Naive thymus-derived CD4-positive, alpha-beta T cell (primary cell): ENCODE measurements at regions of chr10 and their contacts with region 1.

Region 1: DNA sequence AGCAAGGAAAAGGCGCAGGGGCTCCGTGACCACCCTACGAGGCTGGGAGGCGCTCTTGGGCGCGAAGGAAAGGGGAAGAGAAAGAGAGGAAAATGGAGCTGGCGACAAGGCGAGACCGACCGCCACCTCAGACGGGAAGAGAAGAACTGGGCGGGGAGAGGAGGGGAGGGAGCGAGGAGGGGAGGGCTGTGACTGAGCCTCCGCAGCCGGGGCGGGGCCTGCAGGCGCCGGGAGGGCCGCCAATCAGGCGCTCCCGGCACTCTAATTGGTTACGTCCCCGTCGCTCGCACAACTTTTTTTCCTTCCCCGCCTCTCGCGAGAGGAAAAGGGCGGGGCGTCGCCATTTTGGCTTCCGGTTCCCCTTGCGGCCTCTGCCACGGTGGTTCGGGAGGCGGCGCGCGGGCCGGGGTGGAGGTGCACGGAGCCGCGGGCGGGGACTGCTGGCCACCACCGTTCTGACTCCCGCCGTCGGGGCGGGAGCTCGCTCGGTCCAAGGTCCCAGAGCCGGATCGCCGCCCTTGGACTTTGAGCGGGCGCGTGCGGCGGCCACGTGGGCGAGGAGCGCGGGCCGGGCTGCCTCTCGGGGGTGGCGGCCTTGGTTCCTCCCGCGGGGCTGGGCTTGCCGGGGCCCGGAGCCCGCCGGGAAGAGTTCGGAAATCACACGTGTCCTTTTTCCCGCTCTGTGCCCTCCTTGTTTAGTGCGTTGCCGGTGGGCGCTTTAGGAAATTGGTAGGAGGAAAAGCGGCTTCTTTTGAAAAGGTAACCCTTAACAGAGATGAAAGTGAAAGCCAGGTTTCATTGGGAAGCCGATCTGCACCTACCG is at the start of gene GDI2:
- DNase-seq: peak; percentile 94 to 98 (median 97)
- ATAC-seq: peak; percentile 98
- H3K4me3 ChIP-seq: peak within 1 kb of the TSS; percentile 86
- H3K4me3 Mint-ChIP-seq: peak within 1 kb of the TSS; percentile 85 to 95 (median 93)
- H3K27ac ChIP-seq: peak within 1 kb of the TSS; percentile 99
- H3K27ac Mint-ChIP-seq: peak within 1 kb of the TSS; percentile 85 to 98 (median 95)
- H3K4me1 ChIP-seq: peaks cover 27 to 37% of the 10 kb centered on the region in 2 donors
- H3K4me1 Mint-ChIP-seq: peaks cover 49 to 71% (median 67%) of the 10 kb centered on the region in 7 donors
- H3K27me3 ChIP-seq: no peaks in the 10 kb centered on the region
- H3K27me3 Mint-ChIP-seq: no peaks in the 10 kb centered on the region
- total RNA-seq, gene GDI2: 85.3 to 236 (median 121) TPM

Region 2: GRCh38 chr10:5196702-5197113 is 616.8 kb before region 1 on chr10 and contains the start of gene AKR1C4:
- CTCF ChIA-PET with region 1: no interaction called
- POLR2A ChIA-PET with region 1: no interaction called
- intact Hi-C with region 1: no loop called
- DNase-seq: no peak
- ATAC-seq: no peak
- H3K4me3 ChIP-seq: no peak within 1 kb of the TSS
- H3K4me3 Mint-ChIP-seq: no peak within 1 kb of the TSS
- H3K27ac ChIP-seq: no peak within 1 kb of the TSS
- H3K27ac Mint-ChIP-seq: no peak within 1 kb of the TSS
- H3K4me1 ChIP-seq: no peaks in the 10 kb centered on the region
- H3K4me1 Mint-ChIP-seq: no peaks in the 10 kb centered on the region
- H3K27me3 ChIP-seq: no peaks in the 10 kb centered on the region
- H3K27me3 Mint-ChIP-seq: peaks cover 0 to 6% (median 0%) of the 10 kb centered on the region in 5 donors
- total RNA-seq, gene AKR1C4: not detected

Region 3: DNA sequence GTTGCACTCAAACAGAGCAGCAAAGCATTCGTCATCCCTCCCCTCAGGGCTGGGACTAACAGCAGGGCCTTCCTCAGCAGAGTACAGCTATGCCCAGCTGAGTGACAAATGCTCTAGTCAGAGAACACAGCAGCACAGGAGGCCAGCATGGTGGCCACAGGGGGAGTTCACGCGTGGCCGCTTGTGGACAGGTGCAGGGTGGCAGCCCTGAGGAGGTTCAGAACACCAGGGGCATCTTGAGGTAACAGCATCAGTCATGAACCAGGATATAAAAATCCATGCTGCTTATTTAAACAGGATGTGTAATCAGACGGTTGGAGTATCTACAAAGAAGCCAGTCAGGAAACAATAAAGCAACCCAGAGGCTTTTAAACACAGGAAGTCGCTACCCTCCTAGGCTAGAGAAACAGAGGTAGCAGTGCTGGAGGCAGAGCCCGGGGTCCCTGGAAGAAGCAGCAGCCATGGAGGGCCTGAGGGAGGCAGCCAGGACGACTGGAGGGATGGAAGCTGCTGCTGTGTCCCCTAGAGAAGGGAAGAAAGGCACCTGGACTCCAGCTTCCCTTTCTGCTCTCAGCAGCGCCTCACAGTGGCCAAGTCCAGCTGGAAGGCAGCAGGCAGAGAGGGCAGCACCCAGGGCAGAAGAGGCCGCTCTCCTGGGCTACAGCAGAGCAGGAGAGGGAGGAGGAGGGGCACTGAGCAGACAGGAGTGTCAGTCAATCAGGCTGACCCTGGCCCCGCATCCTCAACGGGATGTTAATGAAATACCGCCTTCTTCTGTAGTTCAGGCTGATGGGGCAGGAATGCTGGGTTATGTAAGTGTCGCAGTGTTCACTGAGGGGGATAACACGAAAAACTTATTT is 519.6 kb before region 1 on chr10:
- CTCF ChIA-PET with region 1: no interaction called
- POLR2A ChIA-PET with region 1: no interaction called
- intact Hi-C with region 1: loop called in 1 of 2 experiments (anchors 2 kb)
- DNase-seq: peak; percentile 52 to 78 (median 67)
- ATAC-seq: peak; percentile 60
- H3K4me3 ChIP-seq: peak overlapping the region; percentile 58
- H3K4me3 Mint-ChIP-seq: peak overlapping the region; percentile 82 to 100 (median 94)
- H3K27ac ChIP-seq: peak overlapping the region; percentile 71
- H3K27ac Mint-ChIP-seq: peak overlapping the region in 8 of 9 donors; percentile 88 to 100 (median 98)
- H3K4me1 ChIP-seq: peaks cover 47 to 49% of the 10 kb centered on the region in 2 donors
- H3K4me1 Mint-ChIP-seq: peaks cover 61 to 96% (median 80%) of the 10 kb centered on the region in 7 donors
- H3K27me3 ChIP-seq: no peaks in the 10 kb centered on the region
- H3K27me3 Mint-ChIP-seq: no peaks in the 10 kb centered on the region

Region 4: GRCh38 chr10:5776136-5776880 is 37.2 kb before region 1 on chr10:
- CTCF ChIA-PET with region 1: no interaction called
- POLR2A ChIA-PET with region 1: interaction called, 14 read pairs
- intact Hi-C with region 1: loop called (anchors 1 to 5 kb)
- DNase-seq: no peak
- ATAC-seq: peak; percentile 5
- H3K4me3 ChIP-seq: peak overlapping the region; percentile 32
- H3K4me3 Mint-ChIP-seq: peak overlapping the region; percentile 59 to 82 (median 76)
- H3K27ac ChIP-seq: peak overlapping the region; percentile 72
- H3K27ac Mint-ChIP-seq: peak overlapping the region; percentile 83 to 95 (median 94)
- H3K4me1 ChIP-seq: peaks cover 15 to 24% of the 10 kb centered on the region in 2 donors
- H3K4me1 Mint-ChIP-seq: peaks cover 23 to 75% (median 62%) of the 10 kb centered on the region in 7 donors
- H3K27me3 ChIP-seq: no peaks in the 10 kb centered on the region
- H3K27me3 Mint-ChIP-seq: no peaks in the 10 kb centered on the region

Region 5: DNA sequence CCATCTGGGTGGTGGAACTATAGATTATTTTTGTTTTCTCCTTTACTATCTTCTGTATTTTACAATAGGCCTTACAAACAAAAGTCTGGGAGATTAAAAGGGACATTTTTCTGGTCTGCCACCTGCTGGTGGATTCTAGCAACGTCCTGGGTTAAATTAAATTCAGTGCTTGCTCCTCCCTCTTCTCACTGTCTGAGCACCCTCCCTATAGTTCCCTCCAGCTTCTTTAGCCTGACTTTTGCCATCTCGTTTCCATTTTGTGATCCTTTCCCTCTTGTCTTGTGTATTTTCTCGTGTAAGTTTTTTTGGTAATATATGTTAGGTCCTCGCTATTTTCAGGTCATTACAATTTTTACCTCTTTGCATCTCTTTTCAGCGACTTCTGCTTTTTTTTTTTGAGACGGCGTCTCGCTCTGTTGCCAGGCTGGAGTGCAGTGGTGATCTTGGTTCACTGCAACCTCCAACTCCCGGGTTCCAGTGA is 60.1 kb after region 1 on chr10:
- CTCF ChIA-PET with region 1: no interaction called
- POLR2A ChIA-PET with region 1: no interaction called
- intact Hi-C with region 1: loop called (anchors 1 kb)
- DNase-seq: peak; percentile 42 to 76 (median 67)
- ATAC-seq: peak; percentile 96
- H3K4me3 ChIP-seq: no peak overlapping the region
- H3K4me3 Mint-ChIP-seq: peak overlapping the region in 8 of 10 donors; percentile 46 to 76 (median 58)
- H3K27ac ChIP-seq: no peak overlapping the region
- H3K27ac Mint-ChIP-seq: peak overlapping the region in 2 of 9 donors; percentile 60 to 74
- H3K4me1 ChIP-seq: no peaks in the 10 kb centered on the region
- H3K4me1 Mint-ChIP-seq: peaks cover 2 to 10% (median 5%) of the 10 kb centered on the region in 7 donors
- H3K27me3 ChIP-seq: no peaks in the 10 kb centered on the region
- H3K27me3 Mint-ChIP-seq: peaks cover 0 to 4% (median 0%) of the 10 kb centered on the region in 5 donors

Region 6: GRCh38 chr10:5904227-5904626 is 90.7 kb after region 1 on chr10:
- CTCF ChIA-PET with region 1: no interaction called
- POLR2A ChIA-PET with region 1: no interaction called
- intact Hi-C with region 1: no loop called
- DNase-seq: no peak
- ATAC-seq: no peak
- H3K4me3 ChIP-seq: no peak overlapping the region
- H3K4me3 Mint-ChIP-seq: no peak overlapping the region
- H3K27ac ChIP-seq: no peak overlapping the region
- H3K27ac Mint-ChIP-seq: peak overlapping the region in 3 of 9 donors; percentile 26 to 77 (median 37)
- H3K4me1 ChIP-seq: no peaks in the 10 kb centered on the region
- H3K4me1 Mint-ChIP-seq: peaks cover 15 to 47% (median 26%) of the 10 kb centered on the region in 7 donors
- H3K27me3 ChIP-seq: no peaks in the 10 kb centered on the region
- H3K27me3 Mint-ChIP-seq: no peaks in the 10 kb centered on the region

Region 7: DNA sequence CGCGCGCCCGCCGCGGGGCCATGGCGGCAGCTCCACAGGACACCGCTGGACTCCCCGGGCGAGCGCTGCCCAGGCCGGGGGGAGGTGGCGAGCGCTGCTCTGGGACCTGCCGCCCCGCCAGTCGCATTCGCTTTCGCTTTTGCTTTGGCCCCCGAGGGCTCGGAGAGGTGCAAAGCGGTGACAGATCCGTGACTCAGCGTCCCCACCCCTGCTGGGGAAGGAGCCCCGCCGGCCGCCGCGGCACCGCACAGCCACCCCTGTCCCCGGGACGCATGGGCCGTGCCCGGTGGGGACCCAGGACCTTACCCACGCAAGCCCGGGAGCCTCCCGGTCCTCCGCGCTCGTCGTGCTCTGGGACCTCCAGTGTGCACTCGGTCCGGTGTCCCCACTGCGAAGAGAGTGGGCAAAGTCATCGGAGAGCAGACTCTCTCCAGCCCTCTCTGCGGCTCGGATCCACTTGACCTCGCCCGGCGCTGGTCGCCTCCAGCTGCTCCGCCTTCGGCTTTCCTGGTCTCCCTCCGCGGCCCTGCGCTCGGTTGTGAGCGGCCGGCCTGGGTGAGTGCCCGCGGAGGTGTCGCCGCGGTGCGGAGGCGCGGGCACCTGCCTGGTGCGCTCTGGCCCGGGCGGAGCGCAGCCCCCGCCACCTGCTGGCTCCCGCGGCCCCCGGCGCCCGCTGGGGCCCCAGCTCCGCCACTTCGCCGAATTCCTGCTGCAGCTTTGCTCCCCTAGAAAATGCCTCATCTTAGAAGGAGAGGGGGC is 164.2 kb after region 1 on chr10 and contains the start of gene IL15RA:
- CTCF ChIA-PET with region 1: no interaction called
- POLR2A ChIA-PET with region 1: no interaction called
- intact Hi-C with region 1: loop called (anchors 5 to 10 kb)
- DNase-seq: peak; percentile 60 to 89 (median 71)
- ATAC-seq: peak; percentile 84
- H3K4me3 ChIP-seq: peak within 1 kb of the TSS; percentile 97
- H3K4me3 Mint-ChIP-seq: peak within 1 kb of the TSS; percentile 89 to 98 (median 96)
- H3K27ac ChIP-seq: peak within 1 kb of the TSS; percentile 74
- H3K27ac Mint-ChIP-seq: peak within 1 kb of the TSS; percentile 85 to 97 (median 89)
- H3K4me1 ChIP-seq: peaks cover 0 to 6% of the 10 kb centered on the region in 2 donors
- H3K4me1 Mint-ChIP-seq: peaks cover 12 to 36% (median 21%) of the 10 kb centered on the region in 7 donors
- H3K27me3 ChIP-seq: no peaks in the 10 kb centered on the region
- H3K27me3 Mint-ChIP-seq: peaks cover 0 to 21% (median 0%) of the 10 kb centered on the region in 5 donors
- total RNA-seq, gene IL15RA: 3.5 to 24.9 (median 5.6) TPM

Region 8: GRCh38 chr10:6144406-6145165 is 331.1 kb after region 1 on chr10:
- CTCF ChIA-PET with region 1: no interaction called
- POLR2A ChIA-PET with region 1: no interaction called
- intact Hi-C with region 1: loop called in 1 of 2 experiments (anchors 5 kb)
- DNase-seq: peak; percentile 79 to 92 (median 85)
- ATAC-seq: peak; percentile 94
- H3K4me3 ChIP-seq: peak overlapping the region; percentile 92
- H3K4me3 Mint-ChIP-seq: peak overlapping the region; percentile 81 to 92 (median 87)
- H3K27ac ChIP-seq: peak overlapping the region; percentile 86
- H3K27ac Mint-ChIP-seq: peak overlapping the region; percentile 74 to 91 (median 84)
- H3K4me1 ChIP-seq: peaks cover 24 to 39% of the 10 kb centered on the region in 2 donors
- H3K4me1 Mint-ChIP-seq: peaks cover 48 to 68% (median 60%) of the 10 kb centered on the region in 7 donors
- H3K27me3 ChIP-seq: no peaks in the 10 kb centered on the region
- H3K27me3 Mint-ChIP-seq: peaks cover 0 to 1% (median 0%) of the 10 kb centered on the region in 5 donors

Region 9: GRCh38 chr10:7787857-7788638 is 1974.5 kb after region 1 on chr10 and contains the starts of genes ATP5F1C and KIN:
- CTCF ChIA-PET with region 1: no interaction called
- POLR2A ChIA-PET with region 1: no interaction called
- intact Hi-C with region 1: loop called in 1 of 2 experiments (anchors 10 kb)
- DNase-seq: peak; percentile 93 to 98 (median 96)
- ATAC-seq: peak; percentile 98
- H3K4me3 ChIP-seq: peak within 1 kb of the TSS; percentile 79
- H3K4me3 Mint-ChIP-seq: no peak within 1 kb of the TSS
- H3K27ac ChIP-seq: peak within 1 kb of the TSS; percentile 84
- H3K27ac Mint-ChIP-seq: peak within 1 kb of the TSS in 1 of 9 donors; percentile 90
- H3K4me1 ChIP-seq: peaks cover 21 to 28% of the 10 kb centered on the region in 2 donors
- H3K4me1 Mint-ChIP-seq: peaks cover 47 to 77% (median 57%) of the 10 kb centered on the region in 7 donors
- H3K27me3 ChIP-seq: no peaks in the 10 kb centered on the region
- H3K27me3 Mint-ChIP-seq: no peaks in the 10 kb centered on the region
- total RNA-seq, gene ATP5F1C: 113 to 290 (median 122) TPM
- total RNA-seq, gene KIN: 7.2 to 18.4 (median 14.3) TPM